Cardiac septum (tissue), 1 donor: ENCODE measurements at regions of chr1 and their contacts with region 1.

Region 1: GRCh38 chr1:94755675-94756074 is 64.5 kb upstream of the SLC44A3 start:
- DNase-seq: no peak

Region 2: GRCh38 chr1:94713472-94714141 is 42.1 kb before region 1 on chr1:
- intact Hi-C with region 1: no loop called
- DNase-seq: peak; percentile 95

Region 3: DNA sequence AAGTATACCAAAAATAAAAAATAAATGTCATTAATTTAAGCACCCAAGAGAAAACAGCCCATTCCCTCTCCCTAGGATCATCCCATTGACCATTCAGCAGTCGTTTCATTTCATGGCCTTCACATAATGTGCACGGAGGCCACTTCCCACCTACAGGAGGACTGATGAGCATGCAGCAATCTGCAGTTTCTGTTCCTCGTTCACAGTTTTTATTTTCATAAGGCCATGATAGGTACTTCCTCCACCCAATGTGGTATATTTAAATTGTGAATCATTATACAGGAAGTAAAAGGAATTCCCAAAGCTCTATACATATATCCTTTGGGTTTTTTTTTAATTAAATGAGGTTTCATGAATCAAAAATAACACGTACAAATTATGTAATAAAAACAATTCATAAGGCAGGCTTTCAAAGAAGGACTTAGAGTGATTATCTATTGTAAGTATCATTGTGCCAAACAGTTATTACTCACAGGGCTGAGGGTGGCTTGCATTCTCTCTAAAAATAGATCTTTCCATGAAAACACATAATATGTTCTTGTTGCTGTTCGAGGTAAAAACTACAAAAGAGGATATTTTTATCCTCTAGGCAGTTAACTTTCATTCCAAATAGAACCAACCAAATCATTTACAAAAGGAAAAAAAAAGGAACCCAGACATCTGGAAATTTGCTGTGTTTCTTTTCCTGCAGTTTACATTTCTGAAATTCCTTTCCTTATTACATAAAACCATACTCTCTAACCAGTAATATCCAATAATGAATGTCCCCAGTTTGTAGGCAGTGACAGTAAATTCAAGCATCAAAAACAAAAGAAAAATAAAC is 37.0 kb after region 1 on chr1:
- intact Hi-C with region 1: loop called (anchors 5 kb)
- DNase-seq: no peak

Region 4: DNA sequence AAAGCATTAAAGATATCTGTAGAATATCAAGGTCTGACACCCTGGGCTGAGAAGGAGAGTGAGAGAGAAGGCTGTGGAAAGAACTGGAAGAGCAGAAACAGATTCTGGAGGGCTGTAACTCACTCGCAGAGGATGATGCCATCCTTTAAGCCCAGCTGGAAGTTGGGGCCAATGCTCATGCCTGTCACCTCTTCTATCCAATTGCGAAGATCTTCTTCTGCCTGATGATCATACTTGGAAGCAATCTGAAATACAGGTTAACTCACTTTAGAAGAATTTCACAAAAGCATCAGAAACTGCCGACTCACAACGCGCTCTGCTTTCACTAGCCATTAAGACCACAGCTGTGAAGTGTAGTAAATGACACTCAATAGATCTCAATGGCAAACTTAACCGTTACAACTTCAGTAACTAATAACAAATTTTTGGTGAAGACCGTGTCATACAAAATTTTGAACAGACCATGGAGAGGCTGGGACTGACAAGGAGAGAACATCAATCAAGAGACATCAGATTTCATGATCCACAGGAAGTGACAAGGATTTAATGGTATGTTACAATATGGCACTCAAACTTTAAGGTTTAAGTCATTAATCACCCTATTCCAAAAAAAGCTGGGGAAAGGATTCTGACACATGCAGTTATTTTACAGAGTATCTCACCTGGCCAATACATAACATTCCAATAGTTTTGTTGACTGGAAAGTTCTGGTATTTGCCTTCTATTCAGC is 147.8 kb after region 1 on chr1:
- intact Hi-C with region 1: no loop called
- DNase-seq: no peak

Region 5: DNA sequence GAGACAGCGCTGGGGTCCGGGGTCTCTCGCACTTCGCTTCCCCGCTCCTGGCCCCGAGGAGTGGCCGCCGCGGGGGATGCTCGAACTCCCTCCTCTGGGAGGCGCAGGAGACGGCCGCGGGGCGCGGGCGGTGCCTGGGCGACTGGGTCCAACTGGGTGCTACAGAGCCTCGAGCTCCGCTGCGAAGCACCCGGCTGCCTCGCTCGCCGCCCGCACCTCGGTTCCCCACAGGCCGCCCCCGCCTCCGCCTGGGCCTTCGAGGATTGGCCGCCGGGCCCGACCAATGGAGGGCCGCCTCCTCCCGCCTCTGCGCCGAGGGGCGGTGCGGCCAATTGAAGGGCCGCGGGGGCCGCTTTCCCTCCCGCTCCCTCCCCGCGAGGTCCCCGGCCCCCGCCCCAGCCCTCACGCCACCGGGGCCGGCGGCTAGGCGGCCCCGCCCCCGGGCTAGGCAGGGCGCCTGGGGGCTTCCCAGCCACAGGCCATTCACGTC is 171.3 kb after region 1 on chr1 and contains the start of gene CNN3:
- intact Hi-C with region 1: no loop called
- DNase-seq: peak; percentile 93
- total RNA-seq, gene CNN3: 106 TPM